ENCODE measurements at regions of chrX and their contacts with region 1.

Region 1: DNA sequence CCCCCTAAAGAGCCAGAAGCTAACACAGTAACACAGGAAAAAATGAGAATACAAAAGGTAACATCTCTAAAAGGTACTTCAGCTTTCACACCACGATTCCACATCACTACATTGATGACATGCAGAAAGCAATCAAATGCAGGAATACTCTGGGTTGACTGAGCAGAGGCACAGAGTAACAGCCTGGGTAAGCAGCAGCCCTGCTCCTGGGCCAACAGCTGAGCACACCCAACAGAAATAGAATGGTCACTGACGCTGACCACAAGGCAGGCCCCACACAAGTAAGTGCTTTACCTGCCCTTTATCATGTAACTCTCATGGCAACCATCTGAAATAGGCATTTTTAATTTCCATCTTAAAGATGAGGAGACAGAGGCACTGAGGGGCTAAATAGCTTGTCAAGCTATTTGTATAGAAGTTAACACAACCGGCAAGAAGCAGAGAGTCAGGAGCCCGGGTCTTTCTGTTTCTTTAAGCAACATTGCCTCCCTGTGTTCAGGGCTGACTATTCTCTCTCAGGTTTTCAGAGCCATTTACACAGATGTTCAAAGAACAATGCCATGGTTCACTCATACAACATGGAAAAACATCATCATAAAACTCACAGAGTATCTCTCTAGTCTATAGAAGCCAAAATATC is 168.9 kb downstream of the ZNF674 start:
- DNase-seq: peak; percentile 26 to 48
- H3K4me3 ChIP-seq: 0 out of 2 replicates have a peak overlapping the region, but pooled peaks have one; percentile 5
- H3K27ac ChIP-seq: peak overlapping the region; percentile 94
- H3K4me1 ChIP-seq: peaks cover 25% of the 10 kb centered on the region
- H3K27me3 ChIP-seq: no peaks in the 10 kb centered on the region
- CTCF ChIP-seq: peak; percentile 46; the same call in 1 of the 2 replicates

Region 2: GRCh38 chrX:45322382-45322781 is 1054.0 kb before region 1 on chrX:
- CTCF ChIA-PET with region 1: interaction called, 6 read pairs
- POLR2A ChIA-PET with region 1: no interaction called
- intact Hi-C with region 1: loop called (anchors 5 kb)
- DNase-seq: peak; percentile 14 to 52
- H3K4me3 ChIP-seq: no peak overlapping the region
- H3K27ac ChIP-seq: no peak overlapping the region
- H3K4me1 ChIP-seq: 0 out of 2 replicates have a peak, but pooled peaks cover 3% of the 10 kb centered on the region
- H3K27me3 ChIP-seq: no peaks in the 10 kb centered on the region
- CTCF ChIP-seq: peak; percentile 52; the same call in 1 of the 2 replicates

Region 3: GRCh38 chrX:46208225-46208854 is 168.0 kb before region 1 on chrX:
- CTCF ChIA-PET with region 1: no interaction called
- POLR2A ChIA-PET with region 1: no interaction called
- intact Hi-C with region 1: loop called (anchors 1 kb)
- DNase-seq: peak in 1 of 2 experiments; percentile 83
- H3K4me3 ChIP-seq: no peak overlapping the region
- H3K27ac ChIP-seq: peak overlapping the region; percentile 93
- H3K4me1 ChIP-seq: peaks cover 29% of the 10 kb centered on the region
- H3K27me3 ChIP-seq: no peaks in the 10 kb centered on the region
- CTCF ChIP-seq: no peak